HepG2 (cell line): ENCODE measurements at regions of chr14 and their contacts with region 1.

Region 1: GRCh38 chr14:80055667-80056496 is 155.4 kb downstream of the DIO2 start:
- DNase-seq: peak; percentile 16
- ATAC-seq: peak; percentile 68
- H3K4me3 ChIP-seq: no peak overlapping the region
- H3K27ac ChIP-seq: no peak overlapping the region
- H3K4me1 ChIP-seq: no peaks in the 10 kb centered on the region
- H3K27me3 ChIP-seq: no peaks in the 10 kb centered on the region
- CTCF ChIP-seq: peak; percentile 78
- EP300 ChIP-seq: no peak
- POLR2A ChIP-seq: no peak
- RAD21 ChIP-seq: peak; percentile 42; the same call in 1 of the 2 replicates

Region 2: GRCh38 chr14:80213599-80213998 is 157.7 kb after region 1 on chr14:
- CTCF ChIA-PET with region 1: no interaction called
- POLR2A ChIA-PET with region 1: no interaction called
- in situ Hi-C with region 1: no loop called
- intact Hi-C with region 1: loop called (anchors 10 kb)
- DNase-seq: peak; percentile 47
- ATAC-seq: peak; percentile 93
- H3K4me3 ChIP-seq: no peak overlapping the region
- H3K27ac ChIP-seq: no peak overlapping the region
- H3K4me1 ChIP-seq: no peaks in the 10 kb centered on the region
- H3K27me3 ChIP-seq: no peaks in the 10 kb centered on the region; a peak in 1 of 5 replicates
- CTCF ChIP-seq: peak; percentile 74
- EP300 ChIP-seq: no peak
- POLR2A ChIP-seq: no peak
- RAD21 ChIP-seq: peak; percentile 55; the same call in 1 of the 2 replicates

Region 3: DNA sequence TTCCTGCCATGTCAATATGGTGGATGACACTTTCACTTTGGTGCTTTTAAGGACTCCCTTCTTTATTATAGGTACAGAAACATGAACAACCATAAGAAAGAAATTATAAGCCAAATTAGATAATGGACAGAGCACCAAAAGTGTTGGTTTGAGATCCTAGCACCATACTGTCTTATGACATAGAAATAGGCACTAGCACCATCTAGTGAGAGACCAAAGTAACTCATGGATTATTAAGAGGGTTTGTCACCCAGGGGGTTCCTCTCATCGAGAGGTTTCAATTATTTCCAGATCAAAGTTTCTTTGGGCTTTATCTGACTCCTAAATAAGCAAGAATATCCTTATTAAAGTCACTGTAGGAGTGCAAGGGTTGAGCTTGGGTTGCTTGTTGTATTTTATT is 308.4 kb after region 1 on chr14:
- CTCF ChIA-PET with region 1: no interaction called
- POLR2A ChIA-PET with region 1: no interaction called
- in situ Hi-C with region 1: no loop called
- intact Hi-C with region 1: loop called (anchors 5 kb)
- DNase-seq: peak; percentile 3
- ATAC-seq: peak; percentile 70; the same call in 2 of the 3 replicates
- H3K4me3 ChIP-seq: no peak overlapping the region
- H3K27ac ChIP-seq: no peak overlapping the region
- H3K4me1 ChIP-seq: no peaks in the 10 kb centered on the region
- H3K27me3 ChIP-seq: no peaks in the 10 kb centered on the region
- CTCF ChIP-seq: peak; percentile 28; the same call in 1 of the 2 replicates
- EP300 ChIP-seq: no peak
- POLR2A ChIP-seq: no peak
- RAD21 ChIP-seq: no peak

Region 4: GRCh38 chr14:80587075-80587724 is 531.3 kb after region 1 on chr14:
- CTCF ChIA-PET with region 1: interaction called, 6 read pairs
- POLR2A ChIA-PET with region 1: no interaction called
- in situ Hi-C with region 1: no loop called
- intact Hi-C with region 1: loop called (anchors 5 kb)
- DNase-seq: peak; percentile 30
- ATAC-seq: peak; percentile 74
- H3K4me3 ChIP-seq: no peak overlapping the region
- H3K27ac ChIP-seq: no peak overlapping the region
- H3K4me1 ChIP-seq: peaks cover 4% of the 10 kb centered on the region; the same call in 1 of the 2 replicates
- H3K27me3 ChIP-seq: no peaks in the 10 kb centered on the region
- CTCF ChIP-seq: peak; percentile 53
- EP300 ChIP-seq: no peak
- POLR2A ChIP-seq: no peak
- RAD21 ChIP-seq: no peak